Calu3 (cell line): ENCODE measurements at regions of chr15 and their contacts with region 1.

Region 1: GRCh38 chr15:88897456-88898194 is 2.3 kb upstream of the HAPLN3 start:
- DNase-seq: peak; percentile 95
- H3K4me3 Mint-ChIP-seq: no peak overlapping the region
- H3K27ac Mint-ChIP-seq: no peak overlapping the region
- H3K4me1 Mint-ChIP-seq: peaks cover 29% of the 10 kb centered on the region
- H3K27me3 Mint-ChIP-seq: peaks cover 12% of the 10 kb centered on the region
- CTCF ChIP-seq: peak; percentile 60

Region 2: DNA sequence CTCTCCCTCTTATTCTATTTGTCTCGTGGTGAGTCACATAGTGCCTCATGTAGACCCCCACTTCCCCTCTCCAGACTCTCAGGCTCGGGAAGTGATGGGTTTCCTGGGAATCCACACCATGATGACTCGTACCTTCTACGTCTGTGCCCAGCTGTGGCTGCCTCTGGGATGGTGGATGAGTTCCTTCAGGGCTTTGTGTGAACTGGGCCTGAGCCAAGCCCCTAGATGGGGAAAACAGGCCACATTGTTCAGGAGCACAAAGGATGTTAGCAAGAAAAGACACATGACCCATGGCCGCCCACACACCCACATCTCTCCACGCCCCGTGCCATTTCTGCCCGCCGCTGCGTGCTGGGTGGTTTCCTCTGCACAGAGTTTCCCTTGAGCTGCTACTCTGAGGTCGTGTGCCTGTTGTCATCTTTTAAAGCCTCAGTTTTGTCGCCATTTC is 248.3 kb before region 1 on chr15:
- CTCF ChIA-PET with region 1: no interaction called
- intact Hi-C with region 1: no loop called
- DNase-seq: peak; percentile 66
- H3K4me3 Mint-ChIP-seq: peak overlapping the region; percentile 23
- H3K27ac Mint-ChIP-seq: peak overlapping the region; percentile 82
- H3K4me1 Mint-ChIP-seq: peaks cover 30% of the 10 kb centered on the region
- H3K27me3 Mint-ChIP-seq: no peaks in the 10 kb centered on the region
- CTCF ChIP-seq: no peak

Region 3: GRCh38 chr15:89017370-89018066 is 119.9 kb after region 1 on chr15:
- CTCF ChIA-PET with region 1: no interaction called
- intact Hi-C with region 1: loop called (anchors 2 kb)
- DNase-seq: peak; percentile 91
- H3K4me3 Mint-ChIP-seq: peak overlapping the region; percentile 64
- H3K27ac Mint-ChIP-seq: no peak overlapping the region
- H3K4me1 Mint-ChIP-seq: peaks cover 10% of the 10 kb centered on the region
- H3K27me3 Mint-ChIP-seq: peaks cover 13% of the 10 kb centered on the region
- CTCF ChIP-seq: peak; percentile 87

Region 4: DNA sequence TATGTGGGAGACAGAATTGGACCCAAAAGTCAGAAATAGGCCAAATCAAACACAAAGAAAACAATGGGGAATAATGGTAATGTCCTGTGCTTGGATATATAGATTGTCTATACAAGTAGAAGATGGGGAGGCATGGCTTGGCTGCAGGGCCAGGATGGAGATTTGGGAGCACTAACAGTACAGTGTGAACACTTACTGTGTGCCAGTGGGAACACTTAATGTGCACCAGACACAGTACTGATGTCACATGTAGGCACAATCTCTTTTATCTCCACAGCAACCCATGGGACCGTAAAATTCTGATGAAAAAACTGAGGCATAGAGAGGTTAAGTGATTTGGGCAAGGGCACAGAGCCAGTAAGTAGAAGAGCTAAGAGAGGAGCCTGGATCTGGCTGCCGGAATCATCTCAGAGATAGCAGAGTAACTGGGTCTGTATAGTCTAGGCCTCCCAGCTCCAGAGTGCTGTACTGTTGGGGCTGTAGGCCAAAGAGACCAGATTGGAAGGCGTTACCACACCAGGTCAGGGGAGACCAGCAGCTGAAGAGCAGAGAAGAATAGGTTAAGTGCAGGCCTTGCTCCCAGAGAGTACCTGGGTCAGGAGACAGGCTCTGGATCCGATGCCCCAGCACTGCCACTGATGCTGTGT is 260.4 kb after region 1 on chr15:
- CTCF ChIA-PET with region 1: no interaction called
- intact Hi-C with region 1: no loop called
- DNase-seq: no peak
- H3K4me3 Mint-ChIP-seq: no peak overlapping the region
- H3K27ac Mint-ChIP-seq: peak overlapping the region; percentile 1
- H3K4me1 Mint-ChIP-seq: peaks cover 2% of the 10 kb centered on the region
- H3K27me3 Mint-ChIP-seq: no peaks in the 10 kb centered on the region
- CTCF ChIP-seq: no peak

Region 5: DNA sequence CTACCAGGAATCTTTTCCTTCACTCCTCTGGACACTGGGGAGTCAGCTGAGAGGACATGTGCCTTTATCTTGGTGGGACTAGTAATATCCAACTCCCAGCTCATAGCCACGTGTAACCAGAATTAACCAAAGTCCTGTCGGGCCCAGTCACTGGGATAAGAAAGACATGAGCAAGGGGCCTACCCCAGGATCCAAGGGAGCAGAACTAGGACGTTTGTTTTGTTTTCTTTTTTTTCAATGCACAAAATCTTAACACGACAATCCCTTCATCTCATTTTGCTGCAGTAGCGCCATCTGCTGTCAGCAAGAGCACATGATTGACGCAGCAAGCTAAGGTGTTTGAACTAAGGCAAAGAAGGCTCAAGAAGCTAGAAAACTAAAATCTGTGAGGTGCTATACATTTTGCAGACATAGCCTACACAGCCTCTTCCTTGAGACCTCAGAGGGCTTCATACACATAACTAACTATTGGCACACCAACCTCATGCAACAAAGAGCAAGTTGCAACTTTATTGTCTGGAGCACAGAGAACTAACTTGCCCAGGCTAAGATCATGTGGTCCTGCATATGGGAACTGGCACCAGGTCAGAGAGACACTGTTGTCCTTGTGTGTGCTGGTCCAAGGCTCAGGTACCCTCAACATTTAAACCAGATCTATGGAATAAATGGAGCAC is 280.1 kb after region 1 on chr15:
- CTCF ChIA-PET with region 1: no interaction called
- intact Hi-C with region 1: loop called (anchors 5 kb)
- DNase-seq: peak; percentile 70
- H3K4me3 Mint-ChIP-seq: no peak overlapping the region
- H3K27ac Mint-ChIP-seq: no peak overlapping the region
- H3K4me1 Mint-ChIP-seq: no peaks in the 10 kb centered on the region
- H3K27me3 Mint-ChIP-seq: no peaks in the 10 kb centered on the region
- CTCF ChIP-seq: peak; percentile 76

Region 6: DNA sequence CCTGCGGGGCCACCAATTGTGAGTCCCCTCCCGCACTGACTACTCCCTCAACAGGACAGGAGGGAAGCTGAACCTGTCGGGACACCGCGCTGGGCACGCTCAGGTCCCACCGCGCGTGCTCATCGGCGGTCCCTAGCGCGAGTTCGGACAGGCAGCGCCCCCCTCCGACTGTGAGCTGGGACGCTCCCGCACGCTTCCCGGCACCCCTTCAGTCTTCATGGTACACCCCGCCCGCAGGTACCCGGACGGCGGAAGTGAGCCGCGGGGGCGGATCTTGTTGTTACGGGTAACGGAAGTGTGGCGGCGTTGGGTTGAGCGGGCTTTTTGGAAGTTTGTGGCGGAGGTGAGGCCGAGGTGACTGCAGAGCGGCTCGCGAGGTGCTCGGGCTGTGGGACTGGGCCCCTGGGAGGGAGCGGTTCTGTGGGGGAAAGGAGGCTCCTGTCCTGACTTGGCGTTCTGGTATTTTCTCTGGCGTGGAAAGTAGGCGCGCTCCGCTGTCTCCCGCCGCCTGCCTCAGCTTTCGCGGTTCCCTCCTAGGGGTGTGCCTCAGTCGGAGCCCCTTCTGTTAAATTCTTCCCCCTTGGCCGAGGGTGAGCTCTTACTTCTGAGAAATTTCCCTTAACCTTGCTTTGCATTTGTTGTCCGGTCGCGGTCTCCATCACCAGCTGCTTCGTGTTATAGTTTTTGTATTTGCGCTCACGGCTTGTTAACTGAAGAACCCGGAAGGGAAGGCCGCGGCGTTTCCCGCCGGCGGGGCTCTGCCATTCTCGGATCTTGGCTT is 346.3 kb after region 1 on chr15 and contains the start of gene FANCI:
- CTCF ChIA-PET with region 1: no interaction called
- intact Hi-C with region 1: loop called (anchors 1 kb)
- DNase-seq: peak; percentile 98
- H3K4me3 Mint-ChIP-seq: peak within 1 kb of the TSS; percentile 91
- H3K27ac Mint-ChIP-seq: peak within 1 kb of the TSS; percentile 79
- H3K4me1 Mint-ChIP-seq: peaks cover 29% of the 10 kb centered on the region
- H3K27me3 Mint-ChIP-seq: peaks cover 30% of the 10 kb centered on the region
- CTCF ChIP-seq: no peak
- total RNA-seq, gene FANCI: 138 and 140 TPM in 2 replicates